ENCODE measurements at regions of chr2 and their contacts with region 1.

Region 1: GRCh38 chr2:231463698-231464575 is at the start of gene NCL:
- DNase-seq: peak; percentile 88
- H3K4me3 ChIP-seq: peak within 1 kb of the TSS; percentile 95 to 97
- H3K27ac ChIP-seq: peak within 1 kb of the TSS; percentile 99
- H3K4me1 ChIP-seq: peaks cover 11 to 23% of the 10 kb centered on the region in 2 experiments
- H3K27me3 ChIP-seq: no peaks in the 10 kb centered on the region
- CTCF ChIP-seq: no peak
- EP300 ChIP-seq: no peak
- RAD21 ChIP-seq: no peak
- polyA plus RNA-seq, gene NCL: 256 and 285 TPM in 2 replicates

Region 2: GRCh38 chr2:231364961-231365810 is 98.8 kb before region 1 on chr2:
- CTCF ChIA-PET with region 1: no interaction called
- POLR2A ChIA-PET with region 1: interaction called, 12 read pairs
- DNase-seq: peak; percentile 83
- H3K4me3 ChIP-seq: no peak overlapping the region; a peak in 1 of 4 replicates
- H3K27ac ChIP-seq: peak overlapping the region; percentile 76 to 96
- H3K4me1 ChIP-seq: peaks cover 12 to 36% of the 10 kb centered on the region in 2 experiments; a peak in 3 of 4 replicates
- H3K27me3 ChIP-seq: no peaks in the 10 kb centered on the region
- CTCF ChIP-seq: no peak
- EP300 ChIP-seq: peak in 1 of 2 experiments; percentile 37; a peak in 2 of 4 replicates
- RAD21 ChIP-seq: no peak

Region 3: DNA sequence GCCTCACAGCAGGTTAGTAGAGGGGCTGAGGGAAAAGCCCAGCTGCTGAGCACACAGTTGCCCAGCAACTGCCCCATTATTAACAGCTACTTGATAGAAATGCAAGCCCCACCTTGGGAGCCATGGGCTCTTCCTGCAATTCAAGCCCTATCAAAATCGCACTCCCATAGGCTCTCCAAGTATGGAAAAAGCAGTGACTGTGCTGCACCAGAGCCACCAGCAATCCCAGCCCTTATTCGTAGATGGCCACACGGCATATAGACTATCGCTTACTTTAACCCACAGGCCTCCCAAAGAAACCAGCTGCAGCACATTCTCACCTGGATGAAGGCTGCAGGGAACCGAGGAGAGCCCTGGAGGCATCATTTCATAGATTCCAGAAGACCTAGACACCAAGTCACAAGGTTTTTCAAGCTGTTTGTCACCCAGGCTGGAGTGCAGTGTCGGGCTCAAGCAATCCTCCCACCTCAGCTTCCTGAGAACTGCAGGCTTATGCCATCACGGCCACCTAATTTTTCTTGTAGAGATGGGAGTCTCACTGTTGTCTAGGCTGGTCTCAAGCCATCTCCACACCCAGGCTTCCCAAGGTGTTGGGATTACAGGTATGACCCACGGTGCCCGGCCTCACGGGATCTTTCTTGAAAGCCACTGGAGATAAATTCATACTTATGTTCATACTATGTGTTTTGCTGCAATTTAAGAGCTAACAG is 11.0 kb before region 1 on chr2:
- CTCF ChIA-PET with region 1: interaction called, 20 read pairs
- POLR2A ChIA-PET with region 1: interaction called, 59 read pairs
- DNase-seq: no peak
- H3K4me3 ChIP-seq: no peak overlapping the region
- H3K27ac ChIP-seq: no peak overlapping the region
- H3K4me1 ChIP-seq: no peaks in the 10 kb centered on the region
- H3K27me3 ChIP-seq: no peaks in the 10 kb centered on the region
- CTCF ChIP-seq: no peak
- EP300 ChIP-seq: no peak
- RAD21 ChIP-seq: no peak

Region 4: GRCh38 chr2:231482806-231483391 is 19.0 kb after region 1 on chr2:
- CTCF ChIA-PET with region 1: interaction called, 56 read pairs
- POLR2A ChIA-PET with region 1: interaction called, 23 read pairs
- DNase-seq: peak; percentile 96
- H3K4me3 ChIP-seq: no peak overlapping the region; a peak in 1 of 4 replicates
- H3K27ac ChIP-seq: no peak overlapping the region
- H3K4me1 ChIP-seq: no peaks in the 10 kb centered on the region; a peak in 1 of 4 replicates
- H3K27me3 ChIP-seq: no peaks in the 10 kb centered on the region
- CTCF ChIP-seq: peak; percentile 72
- EP300 ChIP-seq: no peak
- RAD21 ChIP-seq: peak; percentile 62

Region 5: DNA sequence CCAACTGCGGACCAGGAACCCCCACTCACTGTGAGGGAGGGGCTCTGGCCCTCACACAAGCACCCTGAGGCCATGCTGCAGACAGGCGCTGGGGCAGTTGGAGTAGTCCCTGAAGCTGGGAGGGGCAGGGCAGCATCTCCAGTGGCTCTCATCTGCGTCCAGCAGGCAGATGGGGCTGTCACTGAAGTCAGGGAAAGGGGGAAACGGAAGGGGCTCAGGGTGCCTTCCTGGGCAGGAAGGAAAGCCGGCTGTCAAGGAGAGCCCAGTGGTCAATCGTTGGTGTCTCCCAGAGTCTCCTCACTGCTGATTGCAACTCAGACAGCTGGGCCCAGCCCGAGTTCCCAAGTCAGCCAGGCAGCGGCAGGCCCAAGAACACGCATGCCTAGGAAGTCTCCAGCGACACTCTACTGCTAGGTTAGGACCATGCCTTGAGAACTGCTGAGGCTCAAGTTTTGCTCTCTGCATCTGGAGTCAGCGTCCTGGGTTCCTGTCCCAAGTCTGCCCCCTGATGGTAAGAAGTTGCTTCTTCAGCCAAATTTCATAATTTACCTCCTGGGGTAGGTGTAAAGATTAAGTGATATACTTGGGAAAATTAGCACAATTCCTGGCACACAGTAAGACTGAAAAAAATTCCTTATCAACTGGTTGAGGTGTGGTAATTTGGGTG is 93.8 kb after region 1 on chr2:
- CTCF ChIA-PET with region 1: interaction called, 13 read pairs
- POLR2A ChIA-PET with region 1: no interaction called
- DNase-seq: peak; percentile 79
- H3K4me3 ChIP-seq: no peak overlapping the region
- H3K27ac ChIP-seq: no peak overlapping the region
- H3K4me1 ChIP-seq: no peaks in the 10 kb centered on the region
- H3K27me3 ChIP-seq: no peaks in the 10 kb centered on the region
- CTCF ChIP-seq: peak; percentile 64
- EP300 ChIP-seq: no peak
- RAD21 ChIP-seq: peak; percentile 85

Region 6: DNA sequence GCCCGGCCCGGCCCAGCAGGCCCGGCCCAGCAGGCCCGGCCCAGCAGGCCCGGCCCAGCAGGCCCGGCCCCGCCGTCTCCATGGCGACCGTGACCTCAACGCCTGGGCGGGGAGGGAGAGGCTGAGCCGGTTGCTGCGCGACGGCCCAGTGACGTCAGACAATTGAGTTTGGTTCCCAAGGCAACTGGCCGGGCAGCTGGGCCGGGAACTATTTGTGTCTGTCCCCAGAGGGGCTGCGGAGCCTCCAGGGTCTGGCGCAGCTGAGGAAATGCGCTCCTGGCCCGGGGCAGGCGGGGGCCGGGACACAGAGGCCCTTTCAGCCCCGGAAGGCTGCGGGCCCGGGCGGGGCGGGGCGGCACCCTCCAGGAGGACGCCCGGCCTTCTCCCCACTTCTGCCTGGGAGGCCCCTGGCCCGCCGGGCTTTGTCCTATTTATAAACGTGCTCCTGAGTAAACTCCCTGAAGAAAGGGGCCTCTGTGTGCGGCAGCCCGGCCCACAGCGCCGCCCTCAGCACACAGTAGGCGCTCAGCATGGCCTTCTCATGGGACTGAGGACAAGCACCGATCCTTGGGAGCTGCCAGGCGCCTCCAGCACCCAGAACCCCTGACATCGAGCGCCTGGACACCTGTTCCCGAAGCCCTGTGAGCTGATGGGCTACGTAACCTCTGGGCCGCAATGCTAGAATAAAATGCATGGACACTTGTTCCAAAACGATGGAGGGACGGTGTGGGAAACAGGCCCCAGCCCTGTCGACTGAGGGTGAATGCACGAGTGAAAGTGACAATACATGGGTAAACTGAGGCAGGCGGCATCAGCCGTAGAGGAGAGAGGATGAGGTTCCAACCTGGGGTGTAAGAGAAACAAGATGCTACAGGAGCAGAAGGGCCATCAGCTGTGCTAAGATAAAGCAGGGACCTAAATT is 141.0 kb after region 1 on chr2:
- CTCF ChIA-PET with region 1: interaction called, 5 read pairs
- POLR2A ChIA-PET with region 1: interaction called, 15 read pairs
- DNase-seq: peak; percentile 99
- H3K4me3 ChIP-seq: peak overlapping the region; percentile 51 to 66
- H3K27ac ChIP-seq: peak overlapping the region; percentile 96
- H3K4me1 ChIP-seq: peaks cover 10 to 28% of the 10 kb centered on the region in 2 experiments
- H3K27me3 ChIP-seq: no peaks in the 10 kb centered on the region
- CTCF ChIP-seq: no peak
- EP300 ChIP-seq: peak in 1 of 2 experiments; percentile 19; a peak in 1 of 4 replicates
- RAD21 ChIP-seq: no peak

Region 7: GRCh38 chr2:231706731-231707624 is 243.0 kb after region 1 on chr2:
- CTCF ChIA-PET with region 1: no interaction called
- POLR2A ChIA-PET with region 1: interaction called, 10 read pairs
- DNase-seq: peak; percentile 93
- H3K4me3 ChIP-seq: peak overlapping the region; percentile 80 to 83
- H3K27ac ChIP-seq: peak overlapping the region; percentile 92 to 100
- H3K4me1 ChIP-seq: peaks cover 5 to 20% of the 10 kb centered on the region in 2 experiments; a peak in 2 of 4 replicates
- H3K27me3 ChIP-seq: no peaks in the 10 kb centered on the region
- CTCF ChIP-seq: peak; percentile 98
- EP300 ChIP-seq: peak in 1 of 2 experiments; percentile 9; a peak in 1 of 4 replicates
- RAD21 ChIP-seq: no peak